Vagina (tissue), 2 donors: ENCODE measurements at regions of chr17 and their contacts with region 1.

Region 1: GRCh38 chr17:21551081-21551881 is 141.0 kb upstream of the KCNJ18 start:
- DNase-seq: no peak
- H3K4me3 ChIP-seq: peak overlapping the region; percentile 67 to 87
- H3K27ac ChIP-seq: peak overlapping the region; percentile 78
- H3K4me1 ChIP-seq: peaks cover 24% of the 10 kb centered on the region
- H3K27me3 ChIP-seq: no peaks in the 10 kb centered on the region
- CTCF ChIP-seq: no peak
- POLR2A ChIP-seq: peak in 1 of 2 donors; percentile 65

Region 2: GRCh38 chr17:21495281-21495680 is 56.0 kb before region 1 on chr17:
- intact Hi-C with region 1: loop called (anchors 5 kb)
- DNase-seq: peak in 1 of 2 donors; percentile 56
- H3K4me3 ChIP-seq: no peak overlapping the region
- H3K27ac ChIP-seq: no peak overlapping the region
- H3K4me1 ChIP-seq: no peaks in the 10 kb centered on the region
- H3K27me3 ChIP-seq: no peaks in the 10 kb centered on the region
- CTCF ChIP-seq: no peak
- POLR2A ChIP-seq: no peak

Region 3: DNA sequence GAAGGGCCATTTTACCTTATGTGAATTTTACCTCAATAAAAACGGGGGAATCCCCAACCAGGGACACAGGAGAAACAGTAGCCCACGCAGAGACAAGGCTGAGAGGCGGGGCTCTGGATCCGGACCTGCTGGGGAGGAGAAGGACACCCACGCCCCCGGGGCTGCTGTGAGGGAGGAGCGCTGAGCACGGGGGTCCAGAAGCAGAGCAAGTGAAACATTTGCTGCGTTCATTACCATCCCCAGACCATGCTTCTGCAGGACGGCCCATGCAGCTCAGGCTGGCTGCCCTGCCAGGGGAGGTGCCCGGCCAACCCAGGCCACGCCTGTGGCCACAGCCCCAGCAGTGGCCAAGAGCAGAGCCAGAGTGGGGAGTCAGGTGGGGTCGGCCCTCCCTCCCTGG is 191.0 kb after region 1 on chr17:
- intact Hi-C with region 1: no loop called
- DNase-seq: no peak
- H3K4me3 ChIP-seq: no peak overlapping the region
- H3K27ac ChIP-seq: no peak overlapping the region
- H3K4me1 ChIP-seq: no peaks in the 10 kb centered on the region
- H3K27me3 ChIP-seq: no peaks in the 10 kb centered on the region
- CTCF ChIP-seq: no peak
- POLR2A ChIP-seq: no peak